ENCODE measurements at regions of chr13 and their contacts with region 1.

Region 1: DNA sequence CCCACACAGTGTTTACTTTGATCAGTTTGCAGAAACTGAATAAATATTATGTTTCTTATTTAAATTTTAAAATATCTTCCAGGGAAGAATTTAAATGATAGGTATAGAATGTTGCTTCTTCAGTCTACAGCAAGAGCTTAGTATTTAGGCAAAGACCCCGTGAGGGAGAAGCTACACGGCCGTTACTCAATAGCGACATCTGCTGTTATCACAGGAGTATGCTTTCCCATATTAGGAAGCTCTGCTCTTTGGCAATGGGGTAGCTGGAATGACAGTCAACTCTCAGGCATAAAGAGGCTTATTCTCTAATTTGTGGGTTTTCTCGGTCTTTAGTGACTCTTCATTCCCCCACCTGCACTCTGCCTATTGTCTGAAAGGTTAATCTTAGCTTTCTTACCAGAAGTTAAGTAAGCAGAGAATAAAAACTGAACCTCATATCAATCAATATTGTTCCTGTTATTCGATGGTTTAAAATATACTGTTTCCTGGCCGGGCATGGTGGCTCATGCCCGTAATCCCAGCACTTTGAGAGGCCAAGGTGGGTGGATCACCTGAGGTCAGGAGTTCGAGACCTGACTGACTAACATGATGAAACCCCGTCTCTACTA is 13.2 kb upstream of the LHFPL6 start:
- DNase-seq: peak; percentile 33
- H3K4me3 ChIP-seq: no peak overlapping the region
- H3K27ac ChIP-seq: no peak overlapping the region
- H3K27me3 ChIP-seq: peaks cover 2% of the 10 kb centered on the region
- CTCF ChIP-seq: peak; percentile 98

Region 2: DNA sequence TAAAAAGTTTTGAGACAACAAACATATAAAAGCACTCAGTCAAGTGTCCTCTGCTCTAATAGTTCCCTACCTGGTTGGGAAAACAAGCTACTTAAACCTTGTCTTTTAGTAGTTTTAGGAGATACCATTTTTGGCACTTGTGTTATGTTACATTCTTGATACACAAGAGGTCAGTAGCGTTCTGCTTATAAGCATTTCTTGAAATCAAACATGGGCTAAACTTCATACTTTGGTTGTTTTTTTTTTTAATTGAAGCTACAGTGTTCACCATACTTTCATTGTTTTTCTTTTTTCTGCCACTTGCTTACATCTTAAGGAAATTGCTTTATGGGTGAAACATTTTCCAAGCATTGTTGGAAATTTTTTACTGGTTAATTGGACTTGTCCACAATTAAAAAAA is 565.0 kb before region 1 on chr13:
- CTCF ChIA-PET with region 1: interaction called, 67 read pairs
- POLR2A ChIA-PET with region 1: no interaction called
- DNase-seq: no peak
- H3K4me3 ChIP-seq: no peak overlapping the region
- H3K27ac ChIP-seq: no peak overlapping the region
- H3K27me3 ChIP-seq: no peaks in the 10 kb centered on the region
- CTCF ChIP-seq: peak; percentile 53

Region 3: DNA sequence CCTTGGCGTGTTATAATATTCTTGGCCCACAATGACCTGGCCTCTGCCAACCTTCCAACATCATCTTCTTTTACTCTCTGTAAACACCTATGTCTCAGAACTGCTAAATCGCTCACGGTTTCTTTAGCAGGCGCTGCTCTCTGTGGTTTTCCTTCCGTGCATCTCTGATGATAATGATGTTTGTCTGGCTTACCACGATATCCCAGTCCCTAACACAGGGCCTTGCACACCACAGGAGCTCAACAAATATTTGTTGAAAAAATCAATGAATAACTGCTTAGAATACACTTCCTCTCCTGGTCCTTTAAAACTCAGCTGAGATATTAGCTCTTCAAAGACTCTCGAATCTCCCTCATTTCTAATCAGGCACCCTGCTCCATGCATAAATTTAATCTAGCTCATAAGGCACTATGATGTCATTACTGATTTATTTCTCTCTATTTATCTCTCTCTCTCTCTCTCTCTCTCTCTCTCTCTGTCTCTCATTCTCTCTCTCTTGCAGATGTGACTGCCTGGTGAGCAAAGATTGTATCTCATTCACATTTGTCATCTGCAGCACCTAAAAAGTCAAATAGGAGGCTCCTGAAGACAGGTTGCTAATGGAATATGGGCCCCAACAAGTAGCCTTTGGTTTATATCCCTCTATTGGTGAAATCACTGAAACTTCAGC is 371.5 kb before region 1 on chr13:
- CTCF ChIA-PET with region 1: interaction called, 10 read pairs
- POLR2A ChIA-PET with region 1: no interaction called
- DNase-seq: no peak
- H3K4me3 ChIP-seq: no peak overlapping the region
- H3K27ac ChIP-seq: no peak overlapping the region
- H3K27me3 ChIP-seq: no peaks in the 10 kb centered on the region
- CTCF ChIP-seq: no peak

Region 4: GRCh38 chr13:39284801-39285388 is 331.3 kb before region 1 on chr13:
- CTCF ChIA-PET with region 1: interaction called, 11 read pairs
- POLR2A ChIA-PET with region 1: no interaction called
- DNase-seq: no peak
- H3K4me3 ChIP-seq: no peak overlapping the region
- H3K27ac ChIP-seq: no peak overlapping the region
- H3K27me3 ChIP-seq: no peaks in the 10 kb centered on the region
- CTCF ChIP-seq: peak; percentile 26; the same call in 1 of the 2 replicates

Region 5: GRCh38 chr13:39415008-39415802 is 201.0 kb before region 1 on chr13:
- CTCF ChIA-PET with region 1: interaction called, 57 read pairs
- POLR2A ChIA-PET with region 1: no interaction called
- DNase-seq: no peak
- H3K4me3 ChIP-seq: no peak overlapping the region
- H3K27ac ChIP-seq: no peak overlapping the region
- H3K27me3 ChIP-seq: no peaks in the 10 kb centered on the region
- CTCF ChIP-seq: peak; percentile 66

Region 6: GRCh38 chr13:39565036-39565949 is 50.9 kb before region 1 on chr13:
- CTCF ChIA-PET with region 1: interaction called, 14 read pairs
- POLR2A ChIA-PET with region 1: no interaction called
- DNase-seq: peak; percentile 83
- H3K4me3 ChIP-seq: peak overlapping the region; percentile 37; the same call in 1 of the 2 replicates
- H3K27ac ChIP-seq: peak overlapping the region; percentile 86
- H3K27me3 ChIP-seq: no peaks in the 10 kb centered on the region
- CTCF ChIP-seq: no peak

Measured in AG04450 (cell line).